Pancreas (tissue), 10 donors: ENCODE measurements at regions of chr2 and their contacts with region 1.

Region 1: DNA sequence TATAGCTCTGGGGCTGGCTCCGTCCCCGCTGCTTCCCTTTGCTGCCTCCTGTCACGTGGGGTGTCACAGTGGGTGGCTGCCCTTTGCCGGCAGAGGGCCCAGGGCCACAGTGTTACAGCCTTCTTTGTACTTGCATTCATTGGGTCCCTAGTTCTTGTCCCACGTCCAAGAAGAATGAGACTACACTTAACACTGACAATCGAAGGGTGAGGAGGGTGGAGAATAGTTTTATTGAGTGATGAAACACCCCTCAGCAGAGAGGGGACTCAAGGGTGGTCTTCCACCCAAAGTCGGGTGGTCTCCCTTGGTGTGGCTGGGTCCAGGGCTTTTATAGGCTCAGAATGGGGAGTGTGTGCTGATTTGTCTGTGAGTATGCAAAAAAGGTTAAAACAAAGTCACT is 1.9 kb downstream of the ATG4B start:
- DNase-seq: no peak
- ATAC-seq: no peak
- H3K4me3 ChIP-seq: no peak overlapping the region
- H3K27ac ChIP-seq: no peak overlapping the region
- H3K4me1 ChIP-seq: peaks cover 8 to 18% (median 17%) of the 10 kb centered on the region in 3 donors
- H3K27me3 ChIP-seq: no peaks in the 10 kb centered on the region
- CTCF ChIP-seq: no peak

Region 2: GRCh38 chr2:241653210-241653750 is 13.9 kb after region 1 on chr2:
- intact Hi-C with region 1: loop called in 1 of 3 experiments (anchors 1 kb)
- DNase-seq: no peak
- ATAC-seq: no peak
- H3K4me3 ChIP-seq: no peak overlapping the region
- H3K27ac ChIP-seq: no peak overlapping the region
- H3K4me1 ChIP-seq: no peaks in the 10 kb centered on the region
- H3K27me3 ChIP-seq: no peaks in the 10 kb centered on the region
- CTCF ChIP-seq: no peak